ENCODE measurements at regions of chr1 and their contacts with region 1.

Region 1: GRCh38 chr1:37486680-37487618 is 12.6 kb downstream of the ZC3H12A start:
- DNase-seq: peak in 1 of 2 donors; percentile 92
- H3K4me3 ChIP-seq: no peak overlapping the region
- H3K27ac ChIP-seq: peak overlapping the region; percentile 89 to 95
- H3K4me1 ChIP-seq: peaks cover 26 to 33% of the 10 kb centered on the region in 2 donors
- H3K27me3 ChIP-seq: no peaks in the 10 kb centered on the region
- CTCF ChIP-seq: peak; percentile 97 to 99 (median 98)

Region 2: DNA sequence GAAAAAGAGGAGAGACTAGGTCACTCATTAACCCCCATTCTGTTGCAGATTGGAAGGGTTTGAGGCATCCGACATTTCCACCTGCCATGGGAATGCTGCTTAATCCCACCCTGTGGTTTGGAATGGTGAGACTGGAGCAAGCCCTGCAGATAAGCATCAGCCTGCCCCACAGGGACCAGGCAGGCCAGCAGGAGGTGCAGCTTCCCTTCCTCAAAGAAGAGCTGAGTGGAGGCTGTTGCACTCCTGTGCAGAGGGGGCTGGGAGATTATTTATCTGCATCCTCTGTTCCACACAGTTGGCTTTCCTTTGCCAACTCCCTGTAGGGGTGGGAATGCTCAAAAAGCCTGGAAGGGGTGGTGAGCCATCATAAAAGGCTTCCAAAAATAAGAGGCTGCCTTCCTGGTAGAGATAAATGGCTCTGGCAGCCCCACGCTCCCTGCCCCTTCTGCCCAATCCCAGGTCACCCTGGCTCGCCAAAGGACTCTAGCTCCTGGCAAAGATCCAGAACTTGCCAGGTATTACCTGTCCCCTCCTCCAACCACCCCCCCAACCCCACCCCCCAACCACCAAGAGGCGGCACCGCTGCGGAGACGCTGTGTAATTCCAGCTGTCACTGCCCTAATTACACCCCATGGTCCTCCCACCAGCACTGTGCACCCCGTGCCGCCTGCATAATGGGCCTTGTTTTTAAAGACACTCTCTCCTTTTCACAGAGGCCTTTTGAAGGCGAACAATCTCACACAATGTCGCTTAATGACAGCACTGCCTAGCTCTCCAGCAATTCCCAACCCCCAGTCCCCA is 95.5 kb before region 1 on chr1:
- intact Hi-C with region 1: no loop called
- DNase-seq: no peak
- H3K4me3 ChIP-seq: no peak overlapping the region
- H3K27ac ChIP-seq: no peak overlapping the region
- H3K4me1 ChIP-seq: no peaks in the 10 kb centered on the region
- H3K27me3 ChIP-seq: no peaks in the 10 kb centered on the region
- CTCF ChIP-seq: no peak

Region 3: GRCh38 chr1:37455516-37455915 is 31.4 kb before region 1 on chr1:
- intact Hi-C with region 1: loop called (anchors 1 kb)
- DNase-seq: no peak
- H3K4me3 ChIP-seq: peak overlapping the region in 1 of 2 donors; percentile 47
- H3K27ac ChIP-seq: peak overlapping the region; percentile 68 to 72
- H3K4me1 ChIP-seq: no peaks in the 10 kb centered on the region
- H3K27me3 ChIP-seq: no peaks in the 10 kb centered on the region
- CTCF ChIP-seq: no peak

Region 4: GRCh38 chr1:37676281-37677243 is 189.6 kb after region 1 on chr1:
- intact Hi-C with region 1: no loop called
- DNase-seq: no peak
- H3K4me3 ChIP-seq: no peak overlapping the region
- H3K27ac ChIP-seq: no peak overlapping the region
- H3K4me1 ChIP-seq: no peaks in the 10 kb centered on the region
- H3K27me3 ChIP-seq: no peaks in the 10 kb centered on the region
- CTCF ChIP-seq: no peak

Region 5: DNA sequence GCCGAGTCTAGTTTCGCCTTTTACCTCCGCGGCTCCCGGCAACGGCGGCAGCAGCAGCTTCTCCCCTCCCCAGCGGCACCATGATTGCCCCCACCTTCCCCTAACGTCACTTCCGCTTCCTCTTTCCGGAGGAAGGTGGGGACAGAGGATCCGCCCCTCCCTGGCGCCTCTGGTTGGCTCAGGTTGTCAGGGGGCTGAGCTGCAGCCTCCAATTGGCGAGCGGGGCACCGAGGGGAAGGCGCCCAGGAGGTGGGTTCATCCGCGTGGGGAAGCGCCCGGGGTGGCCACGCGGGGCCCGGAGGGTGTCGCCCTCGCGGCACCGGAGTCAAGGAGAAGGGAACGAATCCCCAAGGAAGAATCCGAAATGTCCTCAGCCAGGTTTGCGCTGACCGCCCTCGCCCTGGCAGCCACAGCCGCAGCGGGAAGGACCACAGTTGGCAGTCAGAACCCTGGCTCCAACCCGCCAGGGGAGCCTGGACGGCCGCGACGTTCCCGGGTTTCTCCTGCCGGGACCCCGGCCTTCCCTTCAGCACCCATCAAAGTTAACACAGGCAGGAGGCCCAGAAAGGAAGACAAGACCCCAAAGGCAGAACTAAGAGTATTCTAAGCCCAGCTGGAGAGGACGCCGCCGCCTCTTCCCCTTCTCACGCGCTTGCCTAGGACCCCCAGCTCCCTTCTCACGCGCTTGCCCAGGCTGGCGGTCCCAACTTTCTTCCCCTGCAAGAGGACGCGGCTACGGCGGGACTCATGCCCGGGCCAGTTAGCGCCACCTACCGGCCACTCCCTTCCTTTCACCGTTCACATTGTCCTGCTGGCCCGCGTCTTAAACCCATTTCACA is 372.8 kb after region 1 on chr1 and contains the start of gene MTF1:
- intact Hi-C with region 1: no loop called
- DNase-seq: peak; percentile 92 to 98
- H3K4me3 ChIP-seq: peak within 1 kb of the TSS; percentile 68 to 80
- H3K27ac ChIP-seq: peak within 1 kb of the TSS; percentile 82 to 87
- H3K4me1 ChIP-seq: peaks cover 6 to 19% of the 10 kb centered on the region in 2 donors
- H3K27me3 ChIP-seq: no peaks in the 10 kb centered on the region
- CTCF ChIP-seq: peak; percentile 66 to 91 (median 81)
- total RNA-seq, gene MTF1: 10.6 TPM